GM10248 (cell line): ENCODE measurements at regions of chr15 and their contacts with region 1.

Region 1: GRCh38 chr15:51401872-51402517 is 60.5 kb downstream of the GLDN start:
- DNase-seq: peak; percentile 63
- CTCF ChIP-seq: peak; percentile 63

Region 2: DNA sequence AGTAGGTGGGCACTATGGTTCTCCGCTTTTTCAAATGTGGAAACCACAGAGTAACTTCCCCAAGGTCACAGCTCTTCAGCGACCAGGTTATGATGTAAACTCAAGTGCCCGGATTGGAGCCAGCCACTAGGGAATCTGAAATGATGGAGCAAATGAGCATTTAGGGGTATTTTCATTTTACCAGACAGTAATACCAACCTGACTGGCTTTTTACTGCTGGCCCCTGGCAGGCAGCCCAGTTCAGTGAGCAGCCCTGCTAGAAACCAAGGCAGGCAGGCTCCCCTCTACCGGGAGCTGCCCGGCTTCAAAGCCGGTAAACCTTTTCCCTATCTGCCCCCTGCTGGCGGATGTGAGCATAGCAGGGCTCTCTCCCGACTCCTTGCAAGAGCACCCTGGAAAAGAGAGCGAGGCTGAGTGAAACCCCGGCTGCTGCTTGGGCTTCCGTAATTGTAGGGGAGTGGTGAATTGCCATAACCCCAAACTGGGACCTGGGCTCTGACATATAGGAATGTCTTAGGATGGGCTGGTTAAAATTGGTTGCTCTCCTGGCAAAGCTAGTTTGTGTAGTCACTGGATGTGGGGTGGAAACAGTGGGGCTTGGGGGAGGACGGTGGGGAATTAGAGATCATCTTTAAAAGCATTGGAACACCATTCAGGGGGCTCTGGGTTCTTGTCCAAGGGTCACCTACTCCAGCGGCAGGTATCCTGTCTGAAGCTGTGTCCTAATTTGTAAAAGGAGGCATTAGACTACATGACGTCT is 209.3 kb before region 1 on chr15:
- CTCF ChIA-PET with region 1: interaction called, 15 read pairs
- POLR2A ChIA-PET with region 1: no interaction called
- DNase-seq: peak; percentile 76
- CTCF ChIP-seq: peak; percentile 89

Region 3: GRCh38 chr15:51255533-51255932 is 146.5 kb before region 1 on chr15:
- CTCF ChIA-PET with region 1: interaction called, 10 read pairs
- POLR2A ChIA-PET with region 1: interaction called, 3 read pairs
- DNase-seq: no peak
- CTCF ChIP-seq: no peak

Region 4: DNA sequence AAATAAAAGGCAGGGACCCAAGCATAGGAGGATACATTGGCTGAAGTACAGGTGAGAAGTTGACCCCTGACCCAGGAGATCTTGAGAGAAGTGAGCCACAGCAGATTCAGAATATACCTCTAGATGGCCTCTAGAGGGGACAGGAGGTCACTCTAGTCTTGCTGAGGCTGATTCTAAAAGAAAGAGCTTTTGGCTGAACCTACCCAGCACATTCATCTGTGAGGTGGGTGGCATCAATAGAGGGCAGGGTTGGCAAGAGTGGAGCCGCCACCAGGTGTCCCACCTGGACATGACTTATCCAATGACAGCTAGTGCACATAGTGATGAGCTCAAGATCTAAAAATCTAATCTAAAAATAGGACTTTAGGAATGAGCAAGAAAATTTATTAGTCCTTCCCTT is 115.2 kb before region 1 on chr15:
- CTCF ChIA-PET with region 1: interaction called, 39 read pairs
- POLR2A ChIA-PET with region 1: no interaction called
- DNase-seq: peak; percentile 37
- CTCF ChIP-seq: peak; percentile 27

Region 5: GRCh38 chr15:51380999-51381795 is 20.8 kb before region 1 on chr15:
- CTCF ChIA-PET with region 1: interaction called, 28 read pairs
- POLR2A ChIA-PET with region 1: no interaction called
- DNase-seq: peak; percentile 77
- CTCF ChIP-seq: peak; percentile 89

Region 6: GRCh38 chr15:51414257-51415044 is 12.5 kb after region 1 on chr15:
- CTCF ChIA-PET with region 1: interaction called, 31 read pairs
- POLR2A ChIA-PET with region 1: no interaction called
- DNase-seq: no peak
- CTCF ChIP-seq: no peak

Region 7: GRCh38 chr15:51561271-51561670 is 159.3 kb after region 1 on chr15:
- CTCF ChIA-PET with region 1: no interaction called
- POLR2A ChIA-PET with region 1: no interaction called
- DNase-seq: no peak
- CTCF ChIP-seq: no peak